MCF 10A (cell line): ENCODE measurements at regions of chr1 and their contacts with region 1.

Region 1: DNA sequence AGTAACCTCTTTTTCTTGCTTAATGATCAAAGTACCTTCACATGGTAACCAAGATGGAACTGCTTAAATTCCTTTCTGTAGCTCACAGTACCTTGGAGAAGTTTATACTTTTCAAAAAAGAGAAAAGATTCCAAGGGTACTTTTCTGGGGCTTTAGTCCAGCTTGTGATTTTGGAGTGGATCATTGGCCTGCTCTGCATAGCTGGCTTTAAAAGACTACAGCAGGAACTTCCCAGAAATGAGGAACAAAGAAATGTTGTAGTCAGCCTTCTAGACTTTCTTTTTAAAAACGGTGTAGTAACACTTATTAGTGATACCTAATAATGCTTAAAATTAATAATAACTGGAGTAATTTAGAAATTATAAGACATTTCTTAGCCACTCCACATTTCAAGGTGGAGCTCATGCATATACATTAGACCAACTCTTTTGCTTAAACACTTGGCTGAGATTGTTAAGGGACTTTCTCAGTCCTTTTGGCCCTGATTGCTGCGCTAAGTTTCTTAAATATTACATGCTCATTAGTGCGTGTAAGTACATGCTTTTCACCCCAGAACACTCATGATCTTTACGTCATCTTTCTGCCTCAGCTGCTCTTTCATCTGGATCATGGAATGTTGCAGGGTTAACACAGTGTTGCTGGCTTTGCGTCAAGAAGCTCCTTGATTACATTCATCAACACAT is 57.3 kb downstream of the SDCCAG8 start:
- DNase-seq: no peak
- H3K4me3 Mint-ChIP-seq: no peak overlapping the region
- H3K27ac Mint-ChIP-seq: no peak overlapping the region
- H3K4me1 Mint-ChIP-seq: peaks cover 14% of the 10 kb centered on the region
- H3K27me3 Mint-ChIP-seq: no peaks in the 10 kb centered on the region
- CTCF ChIP-seq: no peak

Region 2: DNA sequence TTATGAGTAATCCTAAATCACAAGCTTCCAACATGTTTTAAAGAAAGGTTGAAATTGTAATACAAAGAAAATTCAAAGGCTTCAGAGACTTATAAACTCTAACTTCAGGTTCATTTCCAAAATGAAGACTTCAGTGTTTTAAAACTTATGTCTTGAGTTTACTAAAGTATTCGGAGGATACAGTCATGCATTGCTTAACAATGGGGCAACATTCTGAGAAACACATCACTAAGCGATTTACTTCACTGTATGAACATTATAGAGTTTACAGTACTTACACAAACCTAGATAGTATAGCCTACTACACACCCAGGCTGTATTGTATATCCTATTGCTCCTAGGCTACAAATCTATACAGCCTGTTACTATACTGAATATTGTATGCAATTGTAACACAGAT is 96.4 kb before region 1 on chr1:
- CTCF ChIA-PET with region 1: no interaction called
- POLR2A ChIA-PET with region 1: no interaction called
- intact Hi-C with region 1: no loop called
- DNase-seq: no peak
- H3K4me3 Mint-ChIP-seq: no peak overlapping the region
- H3K27ac Mint-ChIP-seq: no peak overlapping the region
- H3K4me1 Mint-ChIP-seq: peaks cover 20% of the 10 kb centered on the region
- H3K27me3 Mint-ChIP-seq: no peaks in the 10 kb centered on the region
- CTCF ChIP-seq: no peak

Region 3: GRCh38 chr1:243325305-243325890 is 12.3 kb after region 1 on chr1:
- CTCF ChIA-PET with region 1: interaction called, 15 read pairs
- POLR2A ChIA-PET with region 1: interaction called, 4 read pairs
- intact Hi-C with region 1: no loop called
- DNase-seq: peak; percentile 82
- H3K4me3 Mint-ChIP-seq: no peak overlapping the region
- H3K27ac Mint-ChIP-seq: no peak overlapping the region
- H3K4me1 Mint-ChIP-seq: no peaks in the 10 kb centered on the region
- H3K27me3 Mint-ChIP-seq: no peaks in the 10 kb centered on the region
- CTCF ChIP-seq: peak; percentile 97